H1 (cell line): ENCODE measurements at regions of chr11 and their contacts with region 1.

Region 1: GRCh38 chr11:118078911-118079411 is 2.1 kb downstream of the TMPRSS4 start:
- DNase-seq: no peak
- H3K4me3 ChIP-seq: no peak overlapping the region
- H3K27ac ChIP-seq: no peak overlapping the region
- H3K4me1 ChIP-seq: peaks cover 4 to 12% (median 7%) of the 10 kb centered on the region in 4 experiments; a peak in 6 of 7 replicates
- H3K27me3 ChIP-seq: no peaks in the 10 kb centered on the region; a peak in 1 of 7 replicates
- CTCF ChIP-seq: no peak
- EP300 ChIP-seq: no peak
- POLR2A ChIP-seq: no peak
- RAD21 ChIP-seq: no peak

Region 2: DNA sequence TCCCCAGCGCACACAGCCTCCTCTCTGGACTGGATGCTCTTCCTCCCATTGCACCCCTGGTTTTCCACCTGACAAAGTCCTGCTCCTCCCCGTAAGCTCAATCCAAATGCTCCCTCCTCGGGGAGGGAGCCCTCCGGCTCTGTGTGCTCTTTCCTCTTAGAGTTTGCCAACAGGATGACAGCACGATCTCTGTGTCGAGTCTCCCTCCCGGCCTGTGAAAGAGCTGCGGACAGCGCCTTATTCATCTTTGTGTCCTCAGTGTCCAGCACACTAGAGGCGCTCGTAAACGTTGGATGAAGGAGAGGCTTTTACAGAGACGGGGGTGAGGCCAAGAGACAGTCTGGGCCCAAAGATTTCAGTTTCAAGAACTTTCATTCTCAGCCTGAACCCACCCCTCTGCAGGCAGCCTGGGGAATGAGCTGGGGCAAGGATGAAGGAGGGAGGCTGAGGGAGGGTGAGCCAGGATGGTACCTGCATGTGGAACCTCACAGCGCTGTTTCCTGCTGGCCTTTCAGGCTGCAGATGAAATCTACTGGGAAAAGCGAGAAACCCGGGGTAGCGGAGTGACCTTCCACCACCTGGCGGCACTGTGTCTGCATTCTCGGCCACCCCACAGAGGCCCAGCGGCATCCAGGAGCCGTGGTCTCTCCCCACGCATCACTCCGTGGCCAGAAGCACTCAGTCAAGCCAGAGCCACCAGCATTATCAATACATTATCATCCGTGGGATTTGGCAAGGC is 10.6 kb before region 1 on chr11:
- CTCF ChIA-PET with region 1: interaction called, 18 read pairs
- POLR2A ChIA-PET with region 1: no interaction called
- DNase-seq: peak in 1 of 2 experiments; percentile 72
- H3K4me3 ChIP-seq: no peak overlapping the region
- H3K27ac ChIP-seq: no peak overlapping the region
- H3K4me1 ChIP-seq: peaks cover 0 to 6% (median 3%) of the 10 kb centered on the region in 4 experiments; a peak in 3 of 7 replicates
- H3K27me3 ChIP-seq: no peaks in the 10 kb centered on the region
- CTCF ChIP-seq: peak; percentile 71 to 75 (median 72)
- EP300 ChIP-seq: no peak
- POLR2A ChIP-seq: no peak
- RAD21 ChIP-seq: peak; percentile 60 to 78

Region 3: DNA sequence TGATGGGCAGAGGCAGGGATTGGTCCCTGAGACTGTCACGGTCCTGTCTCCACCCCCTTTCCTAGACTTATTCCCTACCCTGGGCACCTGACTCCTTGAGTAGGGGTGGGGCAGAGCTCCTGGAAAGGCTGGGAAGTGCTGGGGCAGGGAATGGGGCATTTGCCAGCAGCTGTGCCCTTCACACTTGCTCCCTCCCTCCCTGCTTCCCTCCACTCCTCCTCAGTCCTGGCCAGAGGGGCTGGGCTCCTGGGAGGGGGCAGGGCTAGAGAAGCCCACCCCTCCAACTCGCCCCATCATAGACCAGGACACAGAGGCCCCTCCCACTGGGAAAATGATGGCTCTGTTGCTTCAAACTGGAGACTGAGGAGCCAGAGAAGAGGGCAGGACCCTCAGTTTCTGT is 85.9 kb after region 1 on chr11:
- CTCF ChIA-PET with region 1: no interaction called
- POLR2A ChIA-PET with region 1: no interaction called
- DNase-seq: no peak
- H3K4me3 ChIP-seq: no peak overlapping the region
- H3K27ac ChIP-seq: no peak overlapping the region
- H3K4me1 ChIP-seq: peaks cover 0 to 7% (median 5%) of the 10 kb centered on the region in 4 experiments; a peak in 6 of 7 replicates
- H3K27me3 ChIP-seq: peaks cover 2 to 45% (median 16%) of the 10 kb centered on the region in 4 experiments
- CTCF ChIP-seq: no peak
- EP300 ChIP-seq: no peak
- POLR2A ChIP-seq: no peak
- RAD21 ChIP-seq: no peak

Region 4: DNA sequence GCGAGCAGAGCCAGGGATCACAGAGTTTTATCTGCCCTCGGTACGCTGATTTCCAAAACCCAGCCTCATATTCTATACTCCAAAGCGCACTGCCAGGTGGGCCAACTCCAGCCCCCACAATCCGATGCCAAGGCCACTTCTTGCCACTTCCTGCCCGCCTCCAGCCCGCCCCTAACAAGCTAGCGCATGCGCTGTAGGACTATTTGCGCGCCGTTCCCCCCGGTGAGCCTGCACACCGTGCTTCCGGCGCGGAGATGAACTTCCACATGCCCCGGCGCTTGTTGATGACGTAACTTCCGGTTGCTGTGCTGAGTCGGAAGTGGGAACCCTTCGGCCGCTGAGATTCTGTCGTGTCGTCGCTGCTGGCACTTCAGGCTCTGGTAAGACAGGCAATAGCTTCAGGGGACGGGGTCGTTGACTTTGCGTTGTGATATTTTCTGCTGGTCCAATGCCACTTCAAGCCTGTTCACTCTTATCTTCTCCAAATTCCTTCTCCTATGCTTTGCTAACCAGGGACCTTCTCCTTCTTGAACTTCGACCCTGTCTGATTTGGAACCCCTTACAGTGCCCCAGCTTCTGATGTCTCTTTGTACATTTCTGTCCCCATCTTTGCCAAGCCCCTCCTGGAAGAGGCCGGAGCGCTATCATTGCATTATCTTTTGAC is 280.5 kb after region 1 on chr11 and contains the start of gene UBE4A:
- CTCF ChIA-PET with region 1: no interaction called
- POLR2A ChIA-PET with region 1: no interaction called
- DNase-seq: peak; percentile 88 to 98
- H3K4me3 ChIP-seq: peak within 1 kb of the TSS; percentile 84 to 100 (median 97)
- H3K27ac ChIP-seq: peak within 1 kb of the TSS; percentile 29
- H3K4me1 ChIP-seq: peaks cover 0 to 4% (median 2%) of the 10 kb centered on the region in 4 experiments; a peak in 2 of 7 replicates
- H3K27me3 ChIP-seq: no peaks in the 10 kb centered on the region; a peak in 1 of 7 replicates
- CTCF ChIP-seq: 0 out of 4 replicates have a peak, but pooled peaks of 1 of the 3 experiments have one; percentile 1
- EP300 ChIP-seq: no peak
- POLR2A ChIP-seq: peak in 1 of 2 experiments; percentile 90; a peak in 2 of 3 replicates
- RAD21 ChIP-seq: no peak
- total RNA-seq, gene UBE4A: 33.5 and 34.5 TPM in 2 replicates